ENCODE measurements at regions of chr1 and their contacts with region 1.

Region 1: GRCh38 chr1:7070389-7071029 is 285.3 kb downstream of the CAMTA1 start:
- DNase-seq: peak in 1 of 2 donors; percentile 68
- ATAC-seq: peak; percentile 84
- H3K4me3 ChIP-seq: peak overlapping the region; percentile 6 to 51
- H3K27ac ChIP-seq: no peak overlapping the region
- H3K4me1 ChIP-seq: no peaks in the 10 kb centered on the region
- H3K27me3 ChIP-seq: no peaks in the 10 kb centered on the region

Region 2: GRCh38 chr1:6889875-6890480 is 180.5 kb before region 1 on chr1:
- intact Hi-C with region 1: loop called in 1 of 2 experiments (anchors 5 kb)
- DNase-seq: peak; percentile 73 to 79
- ATAC-seq: peak; percentile 71
- H3K4me3 ChIP-seq: no peak overlapping the region
- H3K27ac ChIP-seq: no peak overlapping the region
- H3K4me1 ChIP-seq: no peaks in the 10 kb centered on the region
- H3K27me3 ChIP-seq: no peaks in the 10 kb centered on the region

Measured in aorta (tissue), 5 donors.